ENCODE measurements at regions of chr22 and their contacts with region 1.

Region 1: GRCh38 chr22:38872172-38872830 is at the start of gene CBX6:
- DNase-seq: peak; percentile 86 to 91
- ATAC-seq: peak; percentile 65 to 72
- H3K4me3 ChIP-seq: peak within 1 kb of the TSS; percentile 88
- H3K27ac ChIP-seq: peak within 1 kb of the TSS; percentile 99 to 100
- H3K4me1 ChIP-seq: peaks cover 23% of the 10 kb centered on the region
- CTCF ChIP-seq: no peak
- EP300 ChIP-seq: peak in 1 of 2 experiments; percentile 15; a peak in 1 of 5 replicates
- POLR2A ChIP-seq: peak; percentile 51
- RAD21 ChIP-seq: no peak
- polyA plus RNA-seq, gene CBX6: 9.8 and 10.4 TPM in 2 replicates

Region 2: DNA sequence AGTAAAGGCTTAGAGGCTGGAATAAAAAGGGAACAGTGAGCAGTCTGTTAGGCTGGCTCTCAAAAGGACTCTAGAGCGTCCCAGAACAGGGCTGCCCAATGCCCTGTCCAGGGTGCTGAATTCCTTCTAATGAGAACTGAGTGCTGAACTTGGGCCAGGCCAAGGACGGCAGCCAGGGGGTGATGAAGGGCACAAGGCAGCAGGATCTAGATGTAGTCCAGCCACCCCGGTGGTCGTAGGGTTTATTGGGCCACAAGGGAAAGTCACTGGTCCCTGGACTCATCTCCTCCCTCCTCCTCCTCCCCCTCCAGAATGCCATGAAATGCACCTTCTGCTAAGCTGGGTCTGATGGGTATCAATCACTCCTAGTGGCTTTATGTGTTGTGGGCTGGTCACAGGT is 47.7 kb before region 1 on chr22:
- CTCF ChIA-PET with region 1: interaction called, 10 read pairs
- POLR2A ChIA-PET with region 1: no interaction called
- DNase-seq: peak; percentile 31 to 49
- ATAC-seq: peak; percentile 87
- H3K4me3 ChIP-seq: no peak overlapping the region
- H3K27ac ChIP-seq: no peak overlapping the region
- H3K4me1 ChIP-seq: peaks cover 11% of the 10 kb centered on the region
- CTCF ChIP-seq: no peak
- EP300 ChIP-seq: no peak
- POLR2A ChIP-seq: no peak
- RAD21 ChIP-seq: no peak

Region 3: GRCh38 chr22:38843201-38843715 is 29.0 kb before region 1 on chr22:
- CTCF ChIA-PET with region 1: interaction called, 20 read pairs
- POLR2A ChIA-PET with region 1: interaction called, 3 read pairs
- DNase-seq: peak; percentile 55 to 68
- ATAC-seq: peak; percentile 88 to 90
- H3K4me3 ChIP-seq: peak overlapping the region; percentile 74
- H3K27ac ChIP-seq: peak overlapping the region; percentile 69 to 94
- H3K4me1 ChIP-seq: peaks cover 22% of the 10 kb centered on the region; the same call in 2 of the 3 replicates
- CTCF ChIP-seq: peak; percentile 34; the same call in 2 of the 3 replicates
- EP300 ChIP-seq: no peak
- POLR2A ChIP-seq: no peak
- RAD21 ChIP-seq: peak in 1 of 2 experiments; percentile 45; a peak in 2 of 5 replicates

Region 4: DNA sequence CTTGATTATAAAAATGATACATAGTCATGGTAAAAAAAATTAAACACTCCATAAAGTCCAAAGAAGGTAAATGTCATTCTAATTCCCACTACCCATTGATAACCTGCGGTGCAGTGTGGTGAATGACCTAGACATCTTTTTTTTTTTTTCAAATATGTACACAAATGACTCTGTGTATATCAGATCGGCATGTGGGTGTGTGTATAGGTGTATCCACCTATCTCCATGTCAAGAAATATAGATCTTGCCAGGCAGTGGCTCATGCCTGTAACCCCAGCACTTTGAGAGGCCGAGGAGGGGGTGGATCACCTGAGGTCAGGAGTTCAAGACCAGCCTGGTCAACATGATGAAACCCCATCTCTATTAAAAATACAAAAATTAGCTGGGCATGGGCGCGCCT is 18.1 kb after region 1 on chr22:
- CTCF ChIA-PET with region 1: no interaction called
- POLR2A ChIA-PET with region 1: no interaction called
- DNase-seq: no peak
- ATAC-seq: no peak
- H3K4me3 ChIP-seq: no peak overlapping the region
- H3K27ac ChIP-seq: no peak overlapping the region
- H3K4me1 ChIP-seq: no peaks in the 10 kb centered on the region
- CTCF ChIP-seq: no peak
- EP300 ChIP-seq: no peak
- POLR2A ChIP-seq: no peak
- RAD21 ChIP-seq: no peak

Region 5: GRCh38 chr22:38927033-38927781 is 54.9 kb after region 1 on chr22:
- CTCF ChIA-PET with region 1: interaction called, 75 read pairs
- POLR2A ChIA-PET with region 1: interaction called, 17 read pairs
- DNase-seq: peak; percentile 82 to 84
- ATAC-seq: peak; percentile 90
- H3K4me3 ChIP-seq: peak overlapping the region; percentile 46
- H3K27ac ChIP-seq: peak overlapping the region; percentile 72 to 96
- H3K4me1 ChIP-seq: peaks cover 23% of the 10 kb centered on the region
- CTCF ChIP-seq: peak; percentile 86
- EP300 ChIP-seq: no peak
- POLR2A ChIP-seq: no peak
- RAD21 ChIP-seq: peak; percentile 53 to 68

Region 6: GRCh38 chr22:38950527-38951295 is 78.4 kb after region 1 on chr22:
- CTCF ChIA-PET with region 1: interaction called, 10 read pairs
- POLR2A ChIA-PET with region 1: no interaction called
- DNase-seq: no peak
- ATAC-seq: peak in 1 of 2 experiments; percentile 42; a peak in 1 of 6 replicates
- H3K4me3 ChIP-seq: no peak overlapping the region
- H3K27ac ChIP-seq: no peak overlapping the region
- H3K4me1 ChIP-seq: peaks cover 7% of the 10 kb centered on the region; the same call in 2 of the 3 replicates
- CTCF ChIP-seq: no peak
- EP300 ChIP-seq: no peak
- POLR2A ChIP-seq: no peak
- RAD21 ChIP-seq: no peak

Region 7: DNA sequence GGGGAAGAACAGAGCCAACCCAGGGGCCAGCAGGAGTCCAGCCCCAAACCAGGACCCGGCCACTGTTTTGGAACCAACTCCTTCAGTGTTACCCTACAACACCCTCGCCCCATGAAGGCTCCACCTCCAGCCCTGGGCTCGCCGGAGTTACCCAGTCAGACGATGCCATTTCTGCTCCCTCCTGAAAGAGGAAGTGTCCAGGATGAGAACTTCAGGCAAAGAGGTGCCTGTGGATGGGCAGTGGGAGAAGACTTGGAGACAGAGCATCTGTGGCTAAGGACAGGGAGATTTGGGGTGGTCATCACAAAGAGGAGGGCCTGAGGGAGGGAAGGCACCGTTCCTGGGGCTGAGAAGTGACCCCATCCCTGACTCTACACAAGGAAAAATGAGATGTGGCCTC is 123.8 kb after region 1 on chr22:
- CTCF ChIA-PET with region 1: interaction called, 64 read pairs
- POLR2A ChIA-PET with region 1: no interaction called
- DNase-seq: no peak
- ATAC-seq: no peak
- H3K4me3 ChIP-seq: no peak overlapping the region
- H3K27ac ChIP-seq: no peak overlapping the region
- H3K4me1 ChIP-seq: no peaks in the 10 kb centered on the region
- CTCF ChIP-seq: no peak
- EP300 ChIP-seq: no peak
- POLR2A ChIP-seq: no peak
- RAD21 ChIP-seq: no peak